ENCODE measurements at regions of chr5 and their contacts with region 1.

Region 1: DNA sequence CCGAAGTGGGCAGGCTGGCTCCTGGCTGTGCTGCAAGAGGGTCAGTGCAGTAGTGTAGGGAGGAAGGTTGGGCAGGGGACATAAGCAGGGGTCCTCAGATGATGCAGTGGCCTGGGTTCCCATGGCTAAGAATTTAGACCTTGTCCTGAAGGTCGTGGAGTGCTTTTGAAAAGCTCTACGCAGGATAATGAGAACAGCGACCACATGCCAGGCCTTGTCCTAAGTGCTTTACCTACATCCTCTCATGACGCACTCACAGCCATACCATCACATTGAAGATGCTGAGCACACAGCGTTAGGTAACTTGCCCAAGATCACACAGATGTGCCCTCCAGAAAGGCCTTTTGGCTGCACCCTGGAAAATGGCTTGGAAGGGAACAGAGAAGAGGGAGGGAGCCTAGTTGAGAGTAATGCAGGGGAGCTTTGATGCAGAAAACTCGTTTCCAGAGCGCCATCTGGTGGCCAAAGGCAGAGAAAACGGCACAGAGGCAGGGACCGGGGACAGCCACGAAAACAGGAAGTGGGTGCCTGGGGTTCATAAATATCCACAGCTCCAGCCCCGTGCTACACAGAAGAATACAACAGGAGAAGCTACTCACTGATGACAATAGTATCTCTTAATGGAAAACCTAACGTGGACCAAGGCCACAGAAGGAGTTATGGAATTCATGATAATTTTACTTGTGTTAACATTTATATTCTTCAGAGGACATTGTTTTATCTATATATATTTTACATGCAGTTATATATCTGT is 2.6 kb upstream of the PCDH12 start:
- DNase-seq: peak; percentile 77
- ATAC-seq: peak; percentile 99
- H3K4me3 Mint-ChIP-seq: peak overlapping the region; percentile 9
- H3K27ac Mint-ChIP-seq: peak overlapping the region; percentile 75
- H3K4me1 Mint-ChIP-seq: peaks cover 18% of the 10 kb centered on the region
- H3K27me3 Mint-ChIP-seq: peaks cover 3% of the 10 kb centered on the region
- CTCF ChIP-seq: no peak

Region 2: DNA sequence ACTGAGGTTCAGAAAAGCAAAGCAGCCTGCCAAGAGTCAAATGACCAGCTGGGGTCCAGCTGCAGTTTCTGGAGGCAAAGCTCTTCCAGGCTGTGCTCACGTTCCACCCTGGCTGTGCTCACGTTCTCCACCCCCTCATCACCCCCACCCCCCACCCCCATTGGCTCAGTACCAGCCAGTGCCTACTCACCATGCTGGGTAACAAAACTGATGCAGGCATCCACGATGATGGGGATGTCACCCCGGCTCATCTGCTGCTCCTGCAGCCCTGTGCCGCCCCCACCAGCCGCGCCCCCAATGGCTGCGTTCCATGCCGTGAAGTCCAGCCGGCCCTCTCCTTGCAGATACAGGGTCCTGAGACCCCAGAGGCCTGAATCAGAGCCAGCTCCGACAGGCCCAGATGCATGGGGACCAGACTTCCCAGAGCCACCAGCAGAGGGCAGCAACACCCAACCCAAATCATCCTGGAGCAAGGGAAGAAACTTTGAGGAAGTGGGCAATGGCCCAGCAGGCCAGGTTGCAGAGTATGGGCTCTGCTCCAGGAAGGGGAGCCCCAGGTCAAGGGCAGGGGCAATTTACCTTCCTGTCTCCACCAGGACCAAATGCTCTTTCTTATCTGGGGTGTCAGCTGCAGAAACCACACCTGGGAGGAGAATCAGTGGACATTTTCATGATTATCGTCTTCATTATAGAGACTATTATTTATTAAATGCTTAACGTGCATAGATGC is 295.7 kb before region 1 on chr5:
- CTCF ChIA-PET with region 1: interaction called, 29 read pairs
- POLR2A ChIA-PET with region 1: no interaction called
- intact Hi-C with region 1: loop called (anchors 1 kb)
- DNase-seq: peak; percentile 75
- ATAC-seq: peak; percentile 96
- H3K4me3 Mint-ChIP-seq: no peak overlapping the region
- H3K27ac Mint-ChIP-seq: no peak overlapping the region
- H3K4me1 Mint-ChIP-seq: peaks cover 4% of the 10 kb centered on the region
- H3K27me3 Mint-ChIP-seq: peaks cover 4% of the 10 kb centered on the region
- CTCF ChIP-seq: peak; percentile 93

Region 3: GRCh38 chr5:141701360-141702119 is 259.1 kb before region 1 on chr5:
- CTCF ChIA-PET with region 1: interaction called, 133 read pairs
- POLR2A ChIA-PET with region 1: no interaction called
- intact Hi-C with region 1: loop called (anchors 2 kb)
- DNase-seq: peak; percentile 26
- ATAC-seq: peak; percentile 73
- H3K4me3 Mint-ChIP-seq: no peak overlapping the region
- H3K27ac Mint-ChIP-seq: no peak overlapping the region
- H3K4me1 Mint-ChIP-seq: peaks cover 20% of the 10 kb centered on the region
- H3K27me3 Mint-ChIP-seq: peaks cover 57% of the 10 kb centered on the region
- CTCF ChIP-seq: no peak

Region 4: GRCh38 chr5:141889282-141889871 is 71.2 kb before region 1 on chr5:
- CTCF ChIA-PET with region 1: interaction called, 12 read pairs
- POLR2A ChIA-PET with region 1: no interaction called
- intact Hi-C with region 1: loop called (anchors 1 kb)
- DNase-seq: no peak
- ATAC-seq: no peak
- H3K4me3 Mint-ChIP-seq: no peak overlapping the region
- H3K27ac Mint-ChIP-seq: no peak overlapping the region
- H3K4me1 Mint-ChIP-seq: peaks cover 4% of the 10 kb centered on the region
- H3K27me3 Mint-ChIP-seq: peaks cover 31% of the 10 kb centered on the region
- CTCF ChIP-seq: no peak

Region 5: DNA sequence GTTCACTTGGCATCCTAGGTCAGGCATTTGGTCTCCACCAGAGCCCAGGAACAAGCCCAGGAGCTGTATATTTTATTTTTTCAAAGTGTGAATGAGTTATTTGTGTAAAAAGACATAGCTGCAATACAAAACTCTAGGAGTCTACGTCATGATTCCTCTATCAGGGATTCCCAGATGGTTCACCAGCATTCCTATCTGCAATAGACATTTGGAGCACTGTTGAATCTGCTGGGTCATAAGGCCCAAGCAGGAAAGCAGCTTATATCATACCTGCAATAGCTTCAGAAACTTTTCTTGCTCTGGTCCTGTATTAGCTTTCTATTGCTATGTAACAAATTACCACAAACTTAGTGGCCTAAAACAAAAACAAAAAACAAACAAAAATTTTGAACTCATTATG is 53.7 kb before region 1 on chr5:
- CTCF ChIA-PET with region 1: no interaction called
- POLR2A ChIA-PET with region 1: no interaction called
- intact Hi-C with region 1: no loop called
- DNase-seq: no peak
- ATAC-seq: no peak
- H3K4me3 Mint-ChIP-seq: no peak overlapping the region
- H3K27ac Mint-ChIP-seq: no peak overlapping the region
- H3K4me1 Mint-ChIP-seq: no peaks in the 10 kb centered on the region
- H3K27me3 Mint-ChIP-seq: peaks cover 10% of the 10 kb centered on the region
- CTCF ChIP-seq: no peak

Region 6: GRCh38 chr5:141923448-141924352 is 36.9 kb before region 1 on chr5 and contains the start of gene DELE1:
- CTCF ChIA-PET with region 1: interaction called, 17 read pairs
- POLR2A ChIA-PET with region 1: interaction called, 11 read pairs
- intact Hi-C with region 1: loop called (anchors 2 kb)
- DNase-seq: peak; percentile 84
- ATAC-seq: peak; percentile 96
- H3K4me3 Mint-ChIP-seq: peak within 1 kb of the TSS; percentile 91
- H3K27ac Mint-ChIP-seq: peak within 1 kb of the TSS; percentile 95
- H3K4me1 Mint-ChIP-seq: peaks cover 23% of the 10 kb centered on the region
- H3K27me3 Mint-ChIP-seq: no peaks in the 10 kb centered on the region
- CTCF ChIP-seq: no peak
- total RNA-seq, gene DELE1: 95.0 and 114 TPM in 2 replicates